IMR-90 (cell line): ENCODE measurements at regions of chr14 and their contacts with region 1.

Region 1: GRCh38 chr14:22556990-22557623 is 31.9 kb downstream of the DAD1 start:
- DNase-seq: peak; percentile 64
- ATAC-seq: peak; percentile 94
- H3K4me3 ChIP-seq: peak overlapping the region; percentile 36
- H3K27ac ChIP-seq: peak overlapping the region; percentile 86
- H3K4me1 ChIP-seq: peaks cover 13% of the 10 kb centered on the region
- H3K27me3 ChIP-seq: no peaks in the 10 kb centered on the region
- CTCF ChIP-seq: peak; percentile 79
- POLR2A ChIP-seq: no peak
- RAD21 ChIP-seq: peak; percentile 79

Region 2: DNA sequence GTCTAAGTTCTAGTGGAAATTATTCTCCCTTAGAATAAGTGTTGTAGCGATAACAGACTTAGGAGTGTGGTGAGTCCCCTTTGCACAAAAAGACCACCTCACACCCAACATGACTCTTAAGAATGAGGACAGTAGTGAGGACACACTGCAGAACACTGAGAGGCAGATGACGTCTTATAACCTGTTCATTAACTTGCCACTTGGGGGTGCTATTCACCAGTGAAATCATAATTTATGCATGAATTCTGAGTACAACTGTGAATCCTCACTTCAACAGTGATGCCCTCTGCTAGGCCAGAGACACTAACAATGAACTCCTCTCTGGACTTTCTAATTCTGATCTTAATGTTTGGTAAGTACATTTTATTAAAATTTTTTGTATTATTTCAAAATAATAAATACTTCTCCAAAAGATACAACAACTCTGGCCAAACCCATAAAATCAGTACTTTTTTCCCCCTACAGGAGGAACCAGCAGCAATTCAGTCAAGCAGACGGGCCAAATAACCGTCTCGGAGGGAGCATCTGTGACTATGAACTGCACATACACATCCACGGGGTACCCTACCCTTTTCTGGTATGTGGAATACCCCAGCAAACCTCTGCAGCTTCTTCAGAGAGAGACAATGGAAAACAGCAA is 242.8 kb before region 1 on chr14:
- CTCF ChIA-PET with region 1: no interaction called
- POLR2A ChIA-PET with region 1: no interaction called
- dilution Hi-C with region 1: no loop called
- in situ Hi-C with region 1: no loop called
- intact Hi-C with region 1: loop called (anchors 10 kb)
- DNase-seq: peak; percentile 62
- ATAC-seq: peak; percentile 93
- H3K4me3 ChIP-seq: no peak overlapping the region
- H3K27ac ChIP-seq: no peak overlapping the region
- H3K4me1 ChIP-seq: no peaks in the 10 kb centered on the region
- H3K27me3 ChIP-seq: peaks cover 2% of the 10 kb centered on the region; the same call in 1 of the 2 replicates
- CTCF ChIP-seq: peak; percentile 65
- POLR2A ChIP-seq: no peak
- RAD21 ChIP-seq: peak; percentile 50

Region 3: DNA sequence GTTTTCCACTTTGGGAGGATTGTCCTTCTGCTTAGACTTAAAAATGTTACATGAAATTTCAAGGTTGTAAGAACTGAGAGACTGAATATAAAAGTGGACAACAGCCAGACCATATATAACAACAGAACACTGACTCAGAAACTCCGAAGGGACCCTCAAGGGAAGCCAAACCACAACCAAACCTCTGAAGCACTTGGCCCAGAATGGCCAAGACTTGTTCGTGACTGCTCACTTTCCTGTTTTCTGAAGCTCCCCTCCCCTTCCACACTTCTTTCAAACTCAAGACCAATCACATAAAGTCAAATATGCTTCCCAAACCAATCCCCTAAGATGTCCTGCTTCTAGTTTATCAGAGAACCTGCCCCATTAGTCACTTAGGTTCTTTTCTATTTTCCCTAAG is 73.4 kb after region 1 on chr14:
- CTCF ChIA-PET with region 1: no interaction called
- POLR2A ChIA-PET with region 1: no interaction called
- dilution Hi-C with region 1: no loop called
- in situ Hi-C with region 1: no loop called
- intact Hi-C with region 1: no loop called
- DNase-seq: peak; percentile 90
- ATAC-seq: no peak
- H3K4me3 ChIP-seq: no peak overlapping the region
- H3K27ac ChIP-seq: no peak overlapping the region
- H3K4me1 ChIP-seq: peaks cover 4% of the 10 kb centered on the region; the same call in 1 of the 2 replicates
- H3K27me3 ChIP-seq: peaks cover 12% of the 10 kb centered on the region
- CTCF ChIP-seq: no peak
- POLR2A ChIP-seq: no peak
- RAD21 ChIP-seq: no peak

Region 4: DNA sequence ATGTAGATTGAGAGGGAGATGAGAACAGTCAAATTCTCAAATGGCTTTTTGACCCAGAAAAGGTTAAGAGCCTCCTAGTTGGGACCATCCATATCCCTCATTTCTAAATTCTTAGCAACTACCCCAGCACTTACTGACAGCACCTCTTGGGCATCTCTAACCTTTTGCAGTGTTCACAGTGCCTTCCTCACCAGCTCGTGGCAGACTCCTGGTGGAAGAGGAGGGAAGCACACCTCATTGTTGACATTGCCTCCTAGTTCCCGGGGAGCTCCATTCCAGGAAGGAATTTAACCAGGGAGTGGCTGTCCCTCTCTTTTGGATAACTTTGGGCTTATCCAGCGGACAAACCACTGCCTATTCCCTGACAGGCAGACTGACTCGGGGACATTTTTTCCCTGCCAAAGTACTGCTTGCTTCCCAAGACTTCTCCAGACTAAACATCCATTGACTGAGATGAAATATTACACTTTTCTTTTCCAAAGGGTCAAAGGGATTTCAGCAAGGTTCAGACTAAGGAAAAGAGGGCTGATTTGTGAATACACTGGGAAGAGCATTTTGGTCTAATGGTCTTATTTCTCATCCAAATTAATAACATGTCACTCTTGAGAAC is 96.0 kb after region 1 on chr14:
- CTCF ChIA-PET with region 1: interaction called, 8 read pairs
- POLR2A ChIA-PET with region 1: no interaction called
- dilution Hi-C with region 1: no loop called
- in situ Hi-C with region 1: no loop called
- intact Hi-C with region 1: loop called (anchors 2 kb)
- DNase-seq: peak; percentile 74
- ATAC-seq: peak; percentile 97
- H3K4me3 ChIP-seq: no peak overlapping the region
- H3K27ac ChIP-seq: no peak overlapping the region
- H3K4me1 ChIP-seq: no peaks in the 10 kb centered on the region
- H3K27me3 ChIP-seq: 0 out of 2 replicates have a peak, but pooled peaks cover 1% of the 10 kb centered on the region
- CTCF ChIP-seq: peak; percentile 95
- POLR2A ChIP-seq: 0 out of 2 replicates have a peak, but pooled peaks have one; percentile 23
- RAD21 ChIP-seq: peak; percentile 93

Region 5: DNA sequence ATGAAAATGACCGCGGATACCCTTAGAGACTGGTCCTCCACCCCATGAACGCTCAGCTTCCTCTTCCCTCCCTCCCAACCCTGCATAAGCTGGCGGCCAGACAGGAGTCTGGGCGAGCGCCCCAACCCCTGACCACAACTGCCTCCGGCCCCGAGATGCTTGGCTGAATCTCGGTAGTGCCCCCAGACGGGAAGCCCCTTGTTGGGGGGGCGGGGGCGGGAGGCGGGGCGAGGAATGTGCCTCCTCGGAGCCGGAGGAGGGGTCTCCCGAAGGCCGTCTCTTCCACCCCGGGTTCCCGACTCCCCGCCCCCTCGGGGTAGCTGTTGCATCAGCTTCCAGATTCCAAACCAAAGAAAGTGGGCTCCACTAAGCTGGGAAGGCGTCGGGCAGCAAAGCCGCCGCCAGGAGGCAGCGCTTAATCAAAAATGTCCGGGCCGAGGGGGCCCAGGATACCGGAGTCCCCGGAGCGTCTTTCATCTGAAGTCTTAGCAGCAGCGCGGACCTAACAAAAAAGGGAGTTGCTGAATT is 265.5 kb after region 1 on chr14:
- CTCF ChIA-PET with region 1: interaction called, 3 read pairs
- POLR2A ChIA-PET with region 1: interaction called, 3 read pairs
- dilution Hi-C with region 1: no loop called
- in situ Hi-C with region 1: no loop called
- intact Hi-C with region 1: loop called (anchors 1 kb)
- DNase-seq: peak; percentile 86
- ATAC-seq: peak; percentile 73
- H3K4me3 ChIP-seq: peak overlapping the region; percentile 12; the same call in 1 of the 2 replicates
- H3K27ac ChIP-seq: peak overlapping the region; percentile 76
- H3K4me1 ChIP-seq: peaks cover 30% of the 10 kb centered on the region
- H3K27me3 ChIP-seq: no peaks in the 10 kb centered on the region
- CTCF ChIP-seq: peak; percentile 94
- POLR2A ChIP-seq: peak; percentile 34; the same call in 1 of the 2 replicates
- RAD21 ChIP-seq: peak; percentile 90

Region 6: DNA sequence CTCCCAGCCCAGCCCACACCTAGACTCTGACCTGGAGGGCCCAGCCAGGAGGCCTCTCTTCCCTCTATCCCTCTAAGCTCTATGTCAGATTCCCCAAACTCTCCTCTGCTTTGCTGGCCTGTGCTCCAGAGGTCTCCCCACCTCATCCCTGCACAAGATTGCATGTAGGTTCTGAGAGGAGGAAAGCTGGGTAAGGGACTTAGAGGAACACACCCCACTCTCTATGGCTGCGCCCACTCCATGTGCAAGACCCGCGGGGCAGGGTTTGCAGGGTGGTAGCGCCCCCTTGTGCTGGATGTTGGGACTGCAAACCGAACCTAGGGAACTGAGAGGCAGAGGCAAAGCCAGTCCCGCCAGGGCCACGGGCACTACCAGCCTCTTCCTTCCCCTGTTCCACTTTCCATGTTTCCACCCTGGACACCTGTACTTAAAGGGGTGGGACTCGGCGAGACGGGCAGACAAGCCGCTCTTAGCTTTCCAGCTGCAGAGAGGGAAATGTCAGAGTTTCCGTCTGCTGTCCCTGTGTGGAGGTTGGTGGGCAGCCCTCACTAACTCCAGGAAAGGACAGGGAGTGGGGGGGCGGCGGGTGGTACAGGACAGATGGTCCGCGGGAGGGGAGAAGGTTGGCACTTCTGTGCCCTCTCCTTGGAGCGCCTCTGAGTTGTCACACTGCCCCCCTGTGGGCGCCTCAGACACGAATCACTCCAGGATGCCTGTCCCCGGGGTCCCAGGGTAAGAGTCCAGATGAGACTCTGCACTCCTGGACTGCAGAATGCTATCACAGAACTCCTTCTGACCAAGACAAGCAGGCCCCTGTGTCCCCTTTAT is 296.0 kb after region 1 on chr14:
- CTCF ChIA-PET with region 1: interaction called, 6 read pairs
- POLR2A ChIA-PET with region 1: no interaction called
- dilution Hi-C with region 1: no loop called
- in situ Hi-C with region 1: no loop called
- intact Hi-C with region 1: loop called (anchors 1 kb)
- DNase-seq: peak; percentile 83
- ATAC-seq: peak; percentile 66
- H3K4me3 ChIP-seq: peak overlapping the region; percentile 38
- H3K27ac ChIP-seq: peak overlapping the region; percentile 77
- H3K4me1 ChIP-seq: peaks cover 30% of the 10 kb centered on the region
- H3K27me3 ChIP-seq: no peaks in the 10 kb centered on the region
- CTCF ChIP-seq: peak; percentile 95
- POLR2A ChIP-seq: peak; percentile 54; the same call in 1 of the 2 replicates
- RAD21 ChIP-seq: peak; percentile 98

Region 7: DNA sequence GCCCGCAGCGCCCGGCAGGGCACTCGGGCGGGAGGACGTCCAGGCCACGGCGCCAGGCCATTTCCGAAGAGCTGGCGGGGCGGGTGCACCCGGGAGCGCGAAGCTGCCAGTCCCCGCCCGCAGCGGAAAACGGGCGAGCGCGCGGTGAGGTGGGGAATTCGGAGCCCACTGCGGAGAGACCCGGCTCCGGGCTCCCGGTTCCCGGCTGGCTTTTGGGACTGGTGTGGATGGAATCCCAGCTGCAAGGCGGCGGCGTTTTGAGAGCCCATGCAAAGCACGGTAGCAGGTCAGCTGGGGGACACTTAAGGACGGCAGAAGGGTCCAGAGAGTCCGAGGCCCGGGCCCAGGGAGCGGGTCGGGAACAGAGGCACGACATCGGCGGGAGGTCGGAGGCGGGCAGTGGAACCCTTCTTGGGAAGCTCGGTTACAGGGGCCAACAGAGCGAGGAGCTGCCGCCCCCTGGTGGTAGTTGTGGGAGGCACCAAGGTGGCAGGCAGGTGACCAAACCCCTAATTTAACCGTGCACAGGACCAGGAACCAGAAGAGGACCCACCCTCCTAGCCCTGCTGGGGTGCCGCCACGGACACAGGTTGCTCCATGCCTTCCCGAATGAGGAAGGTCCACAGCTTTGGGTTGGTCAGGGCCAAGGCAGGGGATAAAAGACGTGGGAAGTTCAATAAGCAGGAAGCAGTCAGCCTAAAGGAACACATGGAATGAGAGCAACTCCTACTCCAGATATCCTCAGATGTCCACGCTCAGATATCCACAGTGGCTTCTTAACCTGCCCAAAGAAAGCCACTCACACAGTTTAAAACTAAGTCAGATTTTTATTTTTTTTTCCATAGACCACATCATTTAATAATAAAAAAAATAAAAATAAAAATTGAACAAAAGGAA is 500.9 kb after region 1 on chr14:
- CTCF ChIA-PET with region 1: no interaction called
- POLR2A ChIA-PET with region 1: no interaction called
- dilution Hi-C with region 1: no loop called
- in situ Hi-C with region 1: loop called (anchors 10 kb)
- intact Hi-C with region 1: loop called (anchors 1 kb)
- DNase-seq: peak; percentile 76
- ATAC-seq: peak; percentile 55
- H3K4me3 ChIP-seq: peak overlapping the region; percentile 62
- H3K27ac ChIP-seq: peak overlapping the region; percentile 70
- H3K4me1 ChIP-seq: peaks cover 19% of the 10 kb centered on the region
- H3K27me3 ChIP-seq: no peaks in the 10 kb centered on the region
- CTCF ChIP-seq: peak; percentile 89
- POLR2A ChIP-seq: no peak; the same call in 1 of the 2 replicates
- RAD21 ChIP-seq: peak; percentile 82

Region 8: GRCh38 chr14:23301288-23301968 is 744.3 kb after region 1 on chr14:
- CTCF ChIA-PET with region 1: no interaction called
- POLR2A ChIA-PET with region 1: no interaction called
- dilution Hi-C with region 1: no loop called
- in situ Hi-C with region 1: no loop called
- intact Hi-C with region 1: loop called (anchors 10 kb)
- DNase-seq: peak; percentile 98
- ATAC-seq: peak; percentile 84
- H3K4me3 ChIP-seq: peak overlapping the region; percentile 74
- H3K27ac ChIP-seq: peak overlapping the region; percentile 84
- H3K4me1 ChIP-seq: peaks cover 3% of the 10 kb centered on the region
- H3K27me3 ChIP-seq: no peaks in the 10 kb centered on the region
- CTCF ChIP-seq: peak; percentile 88
- POLR2A ChIP-seq: peak; percentile 19
- RAD21 ChIP-seq: no peak; the same call in none of the 2 replicates